MCF 10A (cell line): ENCODE measurements at regions of chr13 and their contacts with region 1.

Region 1: DNA sequence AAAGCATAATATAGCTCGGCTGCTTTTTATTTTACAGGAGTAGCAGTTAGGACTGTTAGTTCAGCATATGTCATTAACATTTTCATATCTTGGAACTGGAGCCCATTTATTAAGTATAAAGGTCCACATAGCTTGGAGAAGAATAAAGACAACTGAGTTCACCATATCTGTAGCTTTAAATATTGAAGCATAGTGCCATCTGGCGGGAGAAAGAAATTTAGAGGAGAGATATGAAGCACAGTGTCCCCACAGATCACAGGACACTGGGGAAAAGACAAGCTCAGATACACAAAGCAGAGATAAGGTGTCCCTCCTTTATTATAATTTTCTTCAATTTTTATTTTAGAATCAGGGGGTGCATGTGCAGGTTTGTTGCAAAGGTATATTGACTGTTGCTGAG is 104.7 kb upstream of the FREM2 start:
- DNase-seq: peak; percentile 61
- H3K4me3 Mint-ChIP-seq: no peak overlapping the region
- H3K27ac Mint-ChIP-seq: no peak overlapping the region
- H3K4me1 Mint-ChIP-seq: no peaks in the 10 kb centered on the region
- H3K27me3 Mint-ChIP-seq: peaks cover 17% of the 10 kb centered on the region
- CTCF ChIP-seq: peak; percentile 32

Region 2: GRCh38 chr13:38530492-38530891 is 51.6 kb before region 1 on chr13:
- CTCF ChIA-PET with region 1: interaction called, 4 read pairs
- POLR2A ChIA-PET with region 1: no interaction called
- intact Hi-C with region 1: loop called (anchors 5 kb)
- DNase-seq: peak; percentile 33
- H3K4me3 Mint-ChIP-seq: no peak overlapping the region
- H3K27ac Mint-ChIP-seq: no peak overlapping the region
- H3K4me1 Mint-ChIP-seq: no peaks in the 10 kb centered on the region
- H3K27me3 Mint-ChIP-seq: peaks cover 29% of the 10 kb centered on the region
- CTCF ChIP-seq: peak; percentile 42

Region 3: GRCh38 chr13:38542601-38543000 is 39.5 kb before region 1 on chr13:
- CTCF ChIA-PET with region 1: interaction called, 11 read pairs
- POLR2A ChIA-PET with region 1: no interaction called
- intact Hi-C with region 1: no loop called
- DNase-seq: peak; percentile 60
- H3K4me3 Mint-ChIP-seq: no peak overlapping the region
- H3K27ac Mint-ChIP-seq: no peak overlapping the region
- H3K4me1 Mint-ChIP-seq: peaks cover 8% of the 10 kb centered on the region
- H3K27me3 Mint-ChIP-seq: peaks cover under 1% of the 10 kb centered on the region
- CTCF ChIP-seq: no peak